ENCODE measurements at regions of chr2 and their contacts with region 1.

Region 1: GRCh38 chr2:2681711-2682251 is 350.7 kb upstream of the MYT1L start:
- DNase-seq: no peak
- H3K4me3 ChIP-seq: no peak overlapping the region
- H3K27ac ChIP-seq: no peak overlapping the region
- H3K4me1 ChIP-seq: no peaks in the 10 kb centered on the region
- H3K27me3 ChIP-seq: peaks cover 10% of the 10 kb centered on the region
- CTCF ChIP-seq: no peak

Region 2: DNA sequence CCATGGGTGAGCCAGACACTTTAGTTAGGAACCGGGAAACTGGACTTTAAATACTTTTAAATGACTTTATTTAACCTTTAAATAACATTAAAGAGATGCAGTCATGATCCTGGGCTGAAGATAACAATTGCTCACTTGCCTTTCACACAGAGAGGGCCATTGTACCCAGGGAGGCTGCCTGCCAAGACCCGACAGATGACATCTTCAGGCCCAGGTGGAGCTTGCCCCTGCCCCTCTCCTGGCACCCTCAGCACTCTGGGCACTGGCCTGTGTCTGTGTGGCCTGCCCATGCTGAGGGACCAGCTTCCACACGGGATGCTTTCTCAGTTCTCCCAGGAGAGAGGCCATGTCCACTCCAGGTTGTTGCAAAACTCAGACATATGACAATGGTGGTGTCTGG is 134.3 kb before region 1 on chr2:
- CTCF ChIA-PET with region 1: no interaction called
- POLR2A ChIA-PET with region 1: no interaction called
- intact Hi-C with region 1: no loop called
- DNase-seq: no peak
- H3K4me3 ChIP-seq: no peak overlapping the region
- H3K27ac ChIP-seq: no peak overlapping the region
- H3K4me1 ChIP-seq: no peaks in the 10 kb centered on the region
- H3K27me3 ChIP-seq: no peaks in the 10 kb centered on the region
- CTCF ChIP-seq: no peak

Region 3: GRCh38 chr2:3536682-3537632 is 855.2 kb after region 1 on chr2:
- CTCF ChIA-PET with region 1: no interaction called
- POLR2A ChIA-PET with region 1: interaction called, 10 read pairs
- intact Hi-C with region 1: no loop called
- DNase-seq: peak; percentile 61
- H3K4me3 ChIP-seq: no peak overlapping the region
- H3K27ac ChIP-seq: no peak overlapping the region
- H3K4me1 ChIP-seq: peaks cover 4% of the 10 kb centered on the region
- H3K27me3 ChIP-seq: no peaks in the 10 kb centered on the region
- CTCF ChIP-seq: peak; percentile 48

Measured in A673 (cell line).